ENCODE measurements at regions of chr6 and their contacts with region 1.

Region 1: DNA sequence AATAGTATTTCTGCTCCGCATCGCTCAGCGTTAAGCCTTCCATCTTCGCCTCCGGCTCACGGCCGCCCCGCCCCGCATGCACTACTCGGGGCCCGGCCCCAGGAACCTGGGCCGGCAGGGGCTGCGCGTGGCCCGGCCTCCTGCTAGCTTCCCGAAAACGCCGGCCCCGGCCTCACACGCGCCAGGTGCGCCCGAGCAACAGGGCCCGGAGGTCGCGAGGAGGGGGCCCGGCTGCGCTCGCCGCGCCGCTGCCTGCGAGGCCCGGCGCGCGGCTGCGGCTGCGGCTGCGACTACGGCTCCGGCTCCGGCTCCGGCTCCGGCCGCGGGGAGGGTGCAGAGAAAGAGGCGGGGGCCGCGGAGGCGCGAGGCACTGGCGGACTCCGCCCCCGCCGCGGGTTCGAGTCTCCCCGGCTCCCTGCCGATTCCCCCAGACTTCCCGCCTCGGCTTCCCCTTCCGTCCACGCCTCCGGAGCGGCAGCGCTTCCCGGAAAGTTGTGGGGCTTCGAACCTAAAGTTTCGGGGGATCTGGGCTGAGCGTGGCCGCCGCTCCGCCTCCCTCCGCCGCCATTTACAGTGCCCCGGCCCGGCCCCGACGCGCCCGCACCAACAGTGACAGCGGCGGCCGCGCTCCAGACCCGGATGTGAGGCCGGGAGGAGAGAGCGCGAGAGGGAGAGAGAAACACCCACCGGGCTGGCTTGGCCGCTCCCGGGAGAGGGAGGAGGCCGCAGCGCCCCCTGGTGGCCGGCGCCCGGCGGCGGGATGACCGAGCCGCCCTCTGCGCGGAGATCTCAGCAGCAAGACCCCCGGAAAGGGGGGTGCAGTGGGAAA is at the start of gene REPS1:
- DNase-seq: peak; percentile 91
- ATAC-seq: peak; percentile 91
- H3K4me3 ChIP-seq: peak within 1 kb of the TSS; percentile 52 to 97 (median 87)
- H3K4me3 Mint-ChIP-seq: peak within 1 kb of the TSS; percentile 87
- H3K27ac ChIP-seq: peak within 1 kb of the TSS; percentile 78 to 90
- H3K27ac Mint-ChIP-seq: peak within 1 kb of the TSS; percentile 95
- H3K4me1 ChIP-seq: peaks cover 23 to 26% of the 10 kb centered on the region in 2 donors
- H3K4me1 Mint-ChIP-seq: peaks cover 21% of the 10 kb centered on the region
- H3K27me3 ChIP-seq: no peaks in the 10 kb centered on the region
- H3K27me3 Mint-ChIP-seq: no peaks in the 10 kb centered on the region
- CTCF ChIP-seq: peak; percentile 98
- total RNA-seq, gene REPS1: 55.5 and 57.1 TPM in 2 replicates

Region 2: GRCh38 chr6:138773177-138774091 is 214.4 kb before region 1 on chr6 and contains the start of gene CCDC28A:
- CTCF ChIA-PET with region 1: interaction called, 3 read pairs
- POLR2A ChIA-PET with region 1: no interaction called
- intact Hi-C with region 1: loop called (anchors 1 kb)
- DNase-seq: peak; percentile 97
- ATAC-seq: peak; percentile 84
- H3K4me3 ChIP-seq: peak within 1 kb of the TSS; percentile 83 to 98 (median 86)
- H3K4me3 Mint-ChIP-seq: peak within 1 kb of the TSS; percentile 99
- H3K27ac ChIP-seq: peak within 1 kb of the TSS; percentile 92 to 97
- H3K27ac Mint-ChIP-seq: peak within 1 kb of the TSS; percentile 99
- H3K4me1 ChIP-seq: peaks cover 21 to 28% of the 10 kb centered on the region in 2 donors
- H3K4me1 Mint-ChIP-seq: peaks cover 32% of the 10 kb centered on the region
- H3K27me3 ChIP-seq: no peaks in the 10 kb centered on the region
- H3K27me3 Mint-ChIP-seq: no peaks in the 10 kb centered on the region
- CTCF ChIP-seq: no peak
- total RNA-seq, gene CCDC28A: 26.3 and 26.9 TPM in 2 replicates

Region 3: DNA sequence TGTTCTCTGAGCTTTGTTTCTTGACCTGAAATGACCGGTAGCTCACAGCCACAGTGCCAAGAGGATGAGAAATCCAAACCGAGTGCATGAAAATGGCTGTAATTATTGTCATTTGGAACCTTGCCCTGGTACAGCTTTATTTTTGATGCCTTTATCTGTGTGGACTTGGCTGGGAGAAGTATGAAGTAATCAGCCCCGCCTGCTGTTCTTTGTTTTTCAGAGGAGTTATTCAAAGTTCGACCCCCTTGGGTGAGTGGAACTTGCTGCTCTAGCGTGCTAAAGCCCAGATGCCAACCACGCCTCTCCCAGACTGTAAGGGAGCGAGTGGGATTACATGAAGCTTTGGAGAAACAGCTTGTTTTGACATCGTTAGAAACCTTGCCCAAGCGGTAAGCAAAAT is 143.7 kb before region 1 on chr6:
- CTCF ChIA-PET with region 1: no interaction called
- POLR2A ChIA-PET with region 1: no interaction called
- intact Hi-C with region 1: no loop called
- DNase-seq: no peak
- ATAC-seq: no peak
- H3K4me3 ChIP-seq: no peak overlapping the region
- H3K4me3 Mint-ChIP-seq: no peak overlapping the region
- H3K27ac ChIP-seq: no peak overlapping the region
- H3K27ac Mint-ChIP-seq: no peak overlapping the region
- H3K4me1 ChIP-seq: no peaks in the 10 kb centered on the region
- H3K4me1 Mint-ChIP-seq: no peaks in the 10 kb centered on the region
- H3K27me3 ChIP-seq: no peaks in the 10 kb centered on the region
- H3K27me3 Mint-ChIP-seq: no peaks in the 10 kb centered on the region
- CTCF ChIP-seq: no peak

Region 4: DNA sequence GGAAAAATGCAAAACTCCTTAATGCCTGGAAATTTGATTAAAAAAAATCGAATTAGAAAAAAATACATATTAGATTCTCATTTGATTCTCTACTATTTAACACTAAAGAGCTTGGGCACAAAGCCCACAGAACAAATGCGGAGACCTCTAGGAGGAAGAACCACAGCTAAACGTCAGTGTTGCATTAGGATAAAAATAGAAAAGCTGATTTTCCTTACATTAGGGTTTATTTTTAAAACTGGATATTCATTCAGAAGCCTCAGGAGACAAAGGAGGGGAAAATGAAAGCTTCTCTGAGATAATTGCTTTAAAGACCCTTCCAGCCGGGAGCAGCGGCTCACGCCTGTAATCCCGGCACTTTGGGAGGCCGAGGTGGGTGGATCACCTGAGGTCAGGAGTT is 114.7 kb before region 1 on chr6:
- CTCF ChIA-PET with region 1: no interaction called
- POLR2A ChIA-PET with region 1: no interaction called
- intact Hi-C with region 1: no loop called
- DNase-seq: no peak
- ATAC-seq: no peak
- H3K4me3 ChIP-seq: no peak overlapping the region
- H3K4me3 Mint-ChIP-seq: no peak overlapping the region
- H3K27ac ChIP-seq: no peak overlapping the region
- H3K27ac Mint-ChIP-seq: no peak overlapping the region
- H3K4me1 ChIP-seq: no peaks in the 10 kb centered on the region
- H3K4me1 Mint-ChIP-seq: peaks cover 3% of the 10 kb centered on the region
- H3K27me3 ChIP-seq: no peaks in the 10 kb centered on the region
- H3K27me3 Mint-ChIP-seq: no peaks in the 10 kb centered on the region
- CTCF ChIP-seq: no peak

Region 5: GRCh38 chr6:138953451-138953850 is 34.4 kb before region 1 on chr6:
- CTCF ChIA-PET with region 1: interaction called, 3 read pairs
- POLR2A ChIA-PET with region 1: no interaction called
- intact Hi-C with region 1: loop called (anchors 5 kb)
- DNase-seq: peak; percentile 16
- ATAC-seq: peak; percentile 53
- H3K4me3 ChIP-seq: no peak overlapping the region
- H3K4me3 Mint-ChIP-seq: no peak overlapping the region
- H3K27ac ChIP-seq: no peak overlapping the region
- H3K27ac Mint-ChIP-seq: no peak overlapping the region
- H3K4me1 ChIP-seq: peaks cover 6 to 14% of the 10 kb centered on the region in 2 donors
- H3K4me1 Mint-ChIP-seq: peaks cover 49% of the 10 kb centered on the region
- H3K27me3 ChIP-seq: no peaks in the 10 kb centered on the region
- H3K27me3 Mint-ChIP-seq: no peaks in the 10 kb centered on the region
- CTCF ChIP-seq: no peak

Region 6: GRCh38 chr6:138973466-138974153 is 14.2 kb before region 1 on chr6:
- CTCF ChIA-PET with region 1: interaction called, 13 read pairs
- POLR2A ChIA-PET with region 1: interaction called, 3 read pairs
- intact Hi-C with region 1: no loop called
- DNase-seq: no peak
- ATAC-seq: no peak
- H3K4me3 ChIP-seq: no peak overlapping the region
- H3K4me3 Mint-ChIP-seq: no peak overlapping the region
- H3K27ac ChIP-seq: no peak overlapping the region
- H3K27ac Mint-ChIP-seq: no peak overlapping the region
- H3K4me1 ChIP-seq: peaks cover 6 to 19% of the 10 kb centered on the region in 2 donors
- H3K4me1 Mint-ChIP-seq: peaks cover 63% of the 10 kb centered on the region
- H3K27me3 ChIP-seq: no peaks in the 10 kb centered on the region
- H3K27me3 Mint-ChIP-seq: no peaks in the 10 kb centered on the region
- CTCF ChIP-seq: no peak

Region 7: DNA sequence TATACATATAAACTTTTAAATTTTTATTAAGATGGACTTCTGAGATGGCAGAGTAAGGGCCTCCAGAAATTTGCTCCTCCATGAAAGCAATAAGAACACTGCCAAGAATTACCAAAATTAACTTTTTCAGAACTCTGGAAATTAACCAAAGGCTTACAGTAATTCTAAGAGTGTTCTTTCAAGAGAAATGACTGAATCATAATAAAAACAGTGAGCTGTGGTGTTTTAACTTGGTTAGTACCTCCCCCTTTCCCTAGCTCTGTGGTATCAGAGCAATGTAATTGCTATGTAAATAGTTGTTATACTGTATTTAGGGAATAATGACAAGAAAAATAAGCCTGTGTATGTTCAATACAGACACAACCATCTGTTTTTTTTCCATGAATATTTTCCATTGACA is 166.0 kb after region 1 on chr6:
- CTCF ChIA-PET with region 1: no interaction called
- POLR2A ChIA-PET with region 1: no interaction called
- intact Hi-C with region 1: no loop called
- DNase-seq: no peak
- ATAC-seq: no peak
- H3K4me3 ChIP-seq: no peak overlapping the region
- H3K4me3 Mint-ChIP-seq: no peak overlapping the region
- H3K27ac ChIP-seq: no peak overlapping the region
- H3K27ac Mint-ChIP-seq: no peak overlapping the region
- H3K4me1 ChIP-seq: peaks cover 30 to 37% of the 10 kb centered on the region in 2 donors
- H3K4me1 Mint-ChIP-seq: peaks cover 68% of the 10 kb centered on the region
- H3K27me3 ChIP-seq: no peaks in the 10 kb centered on the region
- H3K27me3 Mint-ChIP-seq: no peaks in the 10 kb centered on the region
- CTCF ChIP-seq: no peak

Region 8: DNA sequence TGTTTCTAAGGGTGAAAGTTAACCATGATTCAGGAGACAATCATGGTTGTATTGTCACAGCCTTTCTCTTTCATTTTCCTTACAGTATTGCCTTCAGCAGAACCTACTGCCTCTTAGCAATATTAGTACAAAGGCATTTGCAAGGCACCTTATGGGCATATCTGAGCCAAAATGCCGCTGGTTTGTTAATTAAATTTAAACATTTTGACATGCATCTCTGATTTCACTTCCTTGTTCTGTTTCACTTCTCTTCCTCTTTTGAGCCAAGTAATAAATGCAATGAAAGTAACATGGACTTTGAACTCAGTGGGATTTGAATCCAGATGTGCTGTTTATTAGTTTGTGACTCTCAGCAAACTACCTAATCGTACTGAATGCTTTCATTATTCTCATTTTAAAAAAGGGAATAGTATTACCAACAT is 854.0 kb after region 1 on chr6:
- CTCF ChIA-PET with region 1: no interaction called
- POLR2A ChIA-PET with region 1: no interaction called
- intact Hi-C with region 1: no loop called
- DNase-seq: peak; percentile 71
- ATAC-seq: peak; percentile 78
- H3K4me3 ChIP-seq: peak overlapping the region in 2 of 5 experiments; percentile 0 to 21
- H3K4me3 Mint-ChIP-seq: peak overlapping the region; percentile 60
- H3K27ac ChIP-seq: peak overlapping the region in 1 of 2 donors; percentile 64
- H3K27ac Mint-ChIP-seq: peak overlapping the region; percentile 53
- H3K4me1 ChIP-seq: peaks cover 30 to 37% of the 10 kb centered on the region in 2 donors
- H3K4me1 Mint-ChIP-seq: peaks cover 40% of the 10 kb centered on the region
- H3K27me3 ChIP-seq: no peaks in the 10 kb centered on the region
- H3K27me3 Mint-ChIP-seq: no peaks in the 10 kb centered on the region
- CTCF ChIP-seq: no peak